ENCODE measurements at regions of chr7 and their contacts with region 1.

Region 1: DNA sequence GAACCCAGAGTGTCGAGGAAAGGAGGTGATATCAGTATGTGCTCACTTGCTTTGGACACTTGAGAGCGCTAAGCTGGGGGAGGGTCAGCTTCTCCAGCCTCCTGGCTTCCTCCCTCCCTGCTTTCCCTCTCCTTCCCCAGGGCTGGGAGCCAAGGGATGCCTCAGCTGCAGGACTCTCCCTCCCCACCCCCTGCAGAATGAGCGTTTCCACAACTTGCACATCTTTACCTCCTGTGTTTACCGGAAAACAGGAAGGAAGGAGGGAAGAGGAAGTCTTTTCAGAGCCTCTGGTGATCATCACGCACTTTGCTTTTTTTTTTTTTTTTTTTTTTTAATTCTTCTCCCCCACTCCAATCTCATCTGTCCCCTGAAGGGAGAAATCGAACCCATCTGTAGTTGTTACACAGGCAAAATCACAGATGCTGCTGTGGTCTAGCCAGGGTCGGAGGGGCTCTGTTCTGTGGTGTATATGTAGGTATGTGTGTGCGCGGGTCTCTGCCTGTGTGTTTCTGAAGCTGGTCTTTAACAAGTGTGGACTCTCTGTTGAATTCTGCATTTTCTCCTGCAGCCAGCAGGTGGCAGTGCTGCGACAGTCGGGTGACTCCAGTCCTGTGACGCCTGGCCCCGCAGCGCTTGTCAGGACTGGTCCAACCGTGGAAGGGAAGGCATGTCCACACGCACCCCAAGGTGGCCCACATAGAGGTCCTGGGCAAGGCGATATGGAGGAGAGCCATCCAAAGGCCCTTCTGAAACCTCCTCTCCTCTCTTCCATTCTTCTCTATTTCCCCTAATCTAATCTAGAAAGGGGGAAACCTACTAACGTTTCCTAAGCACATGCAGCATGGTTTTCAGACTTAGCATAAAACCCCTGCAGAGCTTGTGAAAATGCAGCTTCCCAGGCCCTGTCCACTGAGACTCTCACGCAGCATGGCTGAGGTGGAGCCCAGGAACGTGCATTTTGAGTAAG is 257.6 kb downstream of the PLXNA4 start:
- DNase-seq: peak; percentile 57 to 65
- ATAC-seq: peak; percentile 86 to 95
- H3K4me3 ChIP-seq: peak overlapping the region in 2 of 4 donors; percentile 4 to 35
- H3K27ac ChIP-seq: no peak overlapping the region
- H3K4me1 ChIP-seq: peaks cover 8 to 9% of the 10 kb centered on the region in 2 donors
- H3K27me3 ChIP-seq: peaks cover 0 to 14% (median 0%) of the 10 kb centered on the region in 3 donors
- CTCF ChIP-seq: peak; percentile 76 to 88 (median 86)
- POLR2A ChIP-seq: no peak

Region 2: DNA sequence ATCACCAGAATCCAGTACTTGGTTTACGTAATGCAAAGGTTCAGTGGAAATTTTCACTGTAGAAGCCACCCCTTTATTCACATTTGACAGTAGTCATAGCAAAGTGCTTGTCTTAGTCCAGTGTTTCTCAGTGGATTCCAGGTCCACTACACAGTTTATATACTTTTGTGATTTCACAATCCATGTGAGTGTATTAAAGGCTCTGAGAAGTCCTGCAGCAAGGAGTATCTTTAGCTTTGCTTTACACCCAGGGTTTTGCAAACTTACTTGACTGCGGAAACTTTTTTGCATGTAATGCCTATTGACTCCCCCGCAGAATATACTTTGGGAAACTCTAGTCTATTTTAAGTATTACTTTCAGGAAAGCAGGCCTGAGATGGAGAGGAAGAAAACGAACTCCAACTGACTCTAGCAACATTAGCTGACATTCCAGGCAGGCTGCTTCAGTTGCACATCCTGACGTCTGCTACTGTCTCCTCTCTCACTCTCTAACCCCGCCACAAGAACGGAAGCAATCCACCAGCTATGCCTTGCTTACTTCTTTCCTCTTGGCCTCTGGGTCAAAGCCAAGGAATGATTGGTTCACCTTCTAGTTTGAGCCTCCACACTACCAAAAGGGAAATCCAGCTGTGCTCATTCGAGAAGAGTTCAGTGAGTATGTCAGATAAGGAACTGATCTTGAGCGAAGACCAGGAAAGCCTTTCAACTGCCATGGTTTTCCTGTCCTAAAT is 251.4 kb after region 1 on chr7:
- in situ Hi-C with region 1: loop called (anchors 5 to 10 kb)
- intact Hi-C with region 1: no loop called
- DNase-seq: no peak
- ATAC-seq: no peak
- H3K4me3 ChIP-seq: no peak overlapping the region
- H3K27ac ChIP-seq: no peak overlapping the region
- H3K4me1 ChIP-seq: peaks cover under 1 to 2% of the 10 kb centered on the region in 2 donors
- H3K27me3 ChIP-seq: peaks cover 11 to 28% (median 16%) of the 10 kb centered on the region in 3 donors
- CTCF ChIP-seq: no peak
- POLR2A ChIP-seq: no peak

Region 3: DNA sequence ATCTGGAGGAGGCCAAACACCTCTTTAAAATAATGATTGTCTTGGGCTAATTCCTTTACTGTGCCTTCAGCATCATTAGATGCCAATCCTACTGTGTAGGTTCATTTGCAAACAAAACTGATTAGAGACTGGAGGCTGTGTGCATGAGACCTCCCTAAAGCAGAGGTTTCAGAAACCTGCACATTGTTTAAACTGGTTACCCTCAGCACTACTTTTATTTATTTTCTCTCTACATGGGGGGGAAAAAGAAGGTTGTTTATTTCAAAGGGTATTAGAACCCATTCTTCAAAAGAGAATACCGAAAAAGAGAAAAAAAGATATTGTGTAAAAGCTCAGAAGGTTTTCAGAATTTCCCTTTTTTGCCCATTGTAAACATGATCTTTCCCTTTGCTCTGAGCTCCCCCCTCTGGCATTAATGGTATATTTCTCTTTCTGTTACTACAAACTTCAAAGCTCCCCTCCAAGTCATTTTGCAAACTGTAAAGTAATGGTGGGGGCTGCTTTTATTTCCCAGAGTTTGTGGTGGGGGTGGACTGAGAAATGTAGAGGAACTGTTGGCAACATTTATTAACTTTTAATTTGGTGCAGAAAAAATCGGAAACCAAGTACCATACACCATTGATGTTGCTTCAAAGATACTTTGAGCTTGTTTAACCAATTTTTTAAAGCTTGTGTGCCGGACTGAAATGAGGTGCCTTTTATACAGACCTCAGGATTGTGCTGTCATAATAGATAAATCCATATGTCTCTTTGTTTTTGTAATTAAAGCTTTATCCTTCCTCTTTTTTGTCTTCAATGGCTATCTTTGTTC is 1115.6 kb after region 1 on chr7:
- in situ Hi-C with region 1: loop called in 1 of 4 experiments (anchors 25 kb)
- intact Hi-C with region 1: loop called (anchors 10 kb)
- DNase-seq: no peak
- ATAC-seq: no peak
- H3K4me3 ChIP-seq: no peak overlapping the region
- H3K27ac ChIP-seq: no peak overlapping the region
- H3K4me1 ChIP-seq: peaks cover 5 to 7% of the 10 kb centered on the region in 2 donors
- H3K27me3 ChIP-seq: no peaks in the 10 kb centered on the region
- CTCF ChIP-seq: peak in 4 of 5 experiments; percentile 15 to 48 (median 32)
- POLR2A ChIP-seq: no peak